ENCODE measurements at regions of chr20 and their contacts with region 1.

Region 1: DNA sequence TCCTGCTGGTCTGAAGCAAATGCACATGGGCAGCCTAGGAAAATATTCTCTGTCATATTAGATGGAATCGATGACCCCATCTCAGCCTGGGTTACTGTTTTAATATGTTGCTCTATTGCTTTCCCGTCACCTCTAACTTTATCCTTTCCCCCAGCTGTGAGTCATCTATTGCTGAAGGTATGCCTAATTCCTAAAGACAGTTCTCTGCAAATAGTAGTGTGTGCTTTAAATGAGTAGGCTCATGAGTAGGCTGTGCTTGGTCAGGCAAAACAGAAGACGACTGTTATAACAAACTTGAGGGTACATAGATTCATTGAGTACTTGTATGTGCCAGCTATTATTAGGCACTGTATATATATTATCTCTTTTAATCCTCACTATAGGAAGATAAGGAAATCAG is 47.2 kb downstream of the CTNNBL1 start:
- DNase-seq: no peak
- H3K4me3 ChIP-seq: no peak overlapping the region
- H3K27ac ChIP-seq: no peak overlapping the region
- H3K4me1 ChIP-seq: peaks cover 20% of the 10 kb centered on the region
- CTCF ChIP-seq: no peak

Region 2: DNA sequence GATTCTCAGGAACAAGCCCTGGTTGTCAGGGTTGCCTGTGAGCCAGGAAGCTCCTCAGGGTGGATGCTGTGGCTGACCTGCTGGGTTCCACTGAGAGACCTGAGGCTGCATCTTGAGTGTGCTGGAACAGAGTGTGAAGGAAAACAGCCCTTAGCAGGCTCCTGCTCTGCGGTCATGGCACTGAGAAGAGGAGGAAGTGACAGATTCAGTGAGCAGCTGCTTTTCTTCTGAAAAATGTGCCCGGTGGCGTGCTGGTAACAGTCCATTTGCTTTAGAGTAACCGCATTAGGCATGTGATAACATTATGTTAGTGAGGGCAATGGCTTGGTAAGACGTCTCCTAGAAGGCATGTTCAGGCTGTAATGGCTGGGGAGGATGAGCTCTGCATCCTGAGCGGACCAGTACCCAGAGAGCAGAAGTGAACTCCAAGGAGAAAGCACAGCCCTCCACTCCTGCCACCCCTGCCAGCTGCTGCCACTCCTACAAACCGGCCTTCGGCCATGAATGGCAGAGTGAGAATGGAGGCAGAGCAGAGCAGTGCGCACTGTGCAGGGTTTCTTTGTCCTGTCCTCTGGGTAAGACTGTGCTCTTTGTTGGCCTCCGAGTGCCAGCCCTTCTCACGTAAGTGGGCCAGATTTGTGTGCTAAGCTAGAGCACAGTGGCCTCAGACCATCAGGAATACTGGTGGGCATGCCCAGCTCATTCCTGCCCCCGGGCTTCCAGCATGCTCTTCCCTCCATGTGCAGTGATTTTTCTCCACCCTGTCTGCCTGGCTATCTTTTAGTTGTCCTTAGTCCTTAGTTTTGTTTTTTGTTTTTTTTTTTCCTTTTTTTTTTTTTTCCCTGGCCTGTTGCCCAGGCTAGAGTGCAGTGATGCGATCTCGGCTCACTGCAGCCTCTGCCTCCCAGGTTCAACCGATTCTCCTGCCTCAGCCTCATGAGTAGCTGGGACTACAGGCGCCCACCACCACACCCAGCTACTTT is 63.8 kb after region 1 on chr20:
- CTCF ChIA-PET with region 1: no interaction called
- POLR2A ChIA-PET with region 1: interaction called, 3 read pairs
- intact Hi-C with region 1: loop called (anchors 1 kb)
- DNase-seq: peak; percentile 86
- H3K4me3 ChIP-seq: peak overlapping the region; percentile 46
- H3K27ac ChIP-seq: peak overlapping the region; percentile 90
- H3K4me1 ChIP-seq: peaks cover 49% of the 10 kb centered on the region
- CTCF ChIP-seq: no peak

Region 3: GRCh38 chr20:39676857-39677391 is 1935.9 kb after region 1 on chr20:
- CTCF ChIA-PET with region 1: no interaction called
- POLR2A ChIA-PET with region 1: no interaction called
- intact Hi-C with region 1: no loop called
- DNase-seq: no peak
- H3K4me3 ChIP-seq: no peak overlapping the region
- H3K27ac ChIP-seq: no peak overlapping the region
- H3K4me1 ChIP-seq: no peaks in the 10 kb centered on the region
- CTCF ChIP-seq: peak; percentile 57